Tibial artery (tissue), 4 donors: ENCODE measurements at regions of chr6 and their contacts with region 1.

Region 1: DNA sequence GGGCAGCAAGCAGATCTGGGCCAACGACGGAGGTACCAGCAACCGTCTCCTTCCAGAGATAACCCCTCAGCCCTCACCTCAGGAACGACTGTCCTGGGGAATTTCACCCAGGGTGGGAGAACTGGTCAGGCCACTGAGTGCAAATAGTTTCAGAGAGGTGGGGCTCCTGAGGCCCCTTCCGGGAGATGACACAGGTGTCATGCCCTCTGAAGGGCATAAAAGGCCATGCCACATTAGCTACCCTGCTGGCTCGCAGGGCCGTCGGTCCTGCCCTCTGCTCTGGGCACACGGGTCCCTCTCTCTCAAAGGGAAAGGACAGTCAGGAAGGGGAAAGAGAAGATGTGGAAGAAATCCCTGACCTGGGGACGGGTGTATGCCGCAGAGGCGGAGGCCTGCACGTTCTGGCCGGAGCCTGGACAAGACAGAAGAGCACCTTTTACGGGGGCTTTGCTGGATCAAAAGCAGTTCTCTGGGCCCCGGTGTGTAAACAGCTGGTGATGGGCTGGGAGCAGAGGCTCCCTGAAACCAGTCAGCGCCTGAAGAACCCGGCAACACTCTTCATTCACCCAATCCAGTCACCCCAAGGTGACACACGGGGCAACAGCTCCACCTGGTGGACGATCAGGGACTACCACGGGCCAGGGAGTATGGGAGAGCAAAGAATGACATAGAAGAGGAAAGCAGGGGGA is 6.4 kb upstream of the TAF8 start:
- DNase-seq: peak; percentile 83 to 90
- H3K4me3 ChIP-seq: no peak overlapping the region
- H3K27ac ChIP-seq: peak overlapping the region; percentile 79 to 87
- H3K4me1 ChIP-seq: peaks cover 4 to 70% (median 43%) of the 10 kb centered on the region in 4 donors
- H3K27me3 ChIP-seq: no peaks in the 10 kb centered on the region
- CTCF ChIP-seq: peak; percentile 90 to 93

Region 2: GRCh38 chr6:40536442-40536841 is 1507.5 kb before region 1 on chr6:
- intact Hi-C with region 1: no loop called
- DNase-seq: no peak
- H3K4me3 ChIP-seq: no peak overlapping the region
- H3K27ac ChIP-seq: no peak overlapping the region
- H3K4me1 ChIP-seq: no peaks in the 10 kb centered on the region
- H3K27me3 ChIP-seq: peaks cover 0 to 22% of the 10 kb centered on the region in 2 donors
- CTCF ChIP-seq: no peak

Region 3: DNA sequence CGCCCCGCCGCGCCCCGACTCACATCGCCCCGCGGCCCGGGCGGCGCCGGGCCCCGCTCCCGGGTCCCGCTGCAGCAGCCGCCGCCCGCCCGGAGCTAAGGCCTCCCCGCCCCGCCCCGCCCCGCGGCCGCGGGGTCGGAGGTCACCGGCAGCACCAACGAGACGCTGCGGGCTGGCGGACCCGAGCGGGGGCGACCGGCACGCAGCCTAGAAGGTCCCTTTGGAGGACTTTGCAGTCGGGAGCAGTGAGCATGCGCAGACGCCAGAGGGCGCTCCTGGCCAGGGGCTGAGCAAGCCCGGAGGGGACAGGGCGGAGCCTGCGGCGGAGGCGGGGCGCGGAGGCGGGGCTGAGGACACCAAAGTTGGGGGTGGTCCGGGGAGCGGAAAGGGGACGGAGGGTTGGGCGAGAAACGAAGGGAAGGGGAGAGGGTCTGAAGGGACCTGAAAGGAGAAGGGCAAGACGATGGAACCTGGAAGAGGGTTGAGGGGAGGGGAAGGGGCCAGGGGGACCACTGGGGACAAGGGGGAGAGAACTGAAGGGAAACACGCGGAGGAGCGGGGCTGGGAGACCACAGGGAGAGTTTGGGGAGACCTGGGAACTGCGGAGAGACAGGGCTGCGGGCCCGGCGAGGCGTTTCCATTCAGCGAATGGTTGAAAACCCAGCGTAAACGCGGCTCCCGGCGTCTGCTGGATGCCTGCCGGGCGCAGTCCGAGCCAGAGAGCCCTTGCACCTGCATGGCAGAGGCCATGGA is 264.0 kb before region 1 on chr6 and contains the start of gene FRS3:
- intact Hi-C with region 1: loop called (anchors 5 kb)
- DNase-seq: peak; percentile 97 to 99
- H3K4me3 ChIP-seq: peak within 1 kb of the TSS; percentile 75 to 80
- H3K27ac ChIP-seq: peak within 1 kb of the TSS; percentile 80 to 86
- H3K4me1 ChIP-seq: peaks cover 0 to 26% (median 18%) of the 10 kb centered on the region in 4 donors
- H3K27me3 ChIP-seq: no peaks in the 10 kb centered on the region
- CTCF ChIP-seq: peak; percentile 93 to 95

Region 4: DNA sequence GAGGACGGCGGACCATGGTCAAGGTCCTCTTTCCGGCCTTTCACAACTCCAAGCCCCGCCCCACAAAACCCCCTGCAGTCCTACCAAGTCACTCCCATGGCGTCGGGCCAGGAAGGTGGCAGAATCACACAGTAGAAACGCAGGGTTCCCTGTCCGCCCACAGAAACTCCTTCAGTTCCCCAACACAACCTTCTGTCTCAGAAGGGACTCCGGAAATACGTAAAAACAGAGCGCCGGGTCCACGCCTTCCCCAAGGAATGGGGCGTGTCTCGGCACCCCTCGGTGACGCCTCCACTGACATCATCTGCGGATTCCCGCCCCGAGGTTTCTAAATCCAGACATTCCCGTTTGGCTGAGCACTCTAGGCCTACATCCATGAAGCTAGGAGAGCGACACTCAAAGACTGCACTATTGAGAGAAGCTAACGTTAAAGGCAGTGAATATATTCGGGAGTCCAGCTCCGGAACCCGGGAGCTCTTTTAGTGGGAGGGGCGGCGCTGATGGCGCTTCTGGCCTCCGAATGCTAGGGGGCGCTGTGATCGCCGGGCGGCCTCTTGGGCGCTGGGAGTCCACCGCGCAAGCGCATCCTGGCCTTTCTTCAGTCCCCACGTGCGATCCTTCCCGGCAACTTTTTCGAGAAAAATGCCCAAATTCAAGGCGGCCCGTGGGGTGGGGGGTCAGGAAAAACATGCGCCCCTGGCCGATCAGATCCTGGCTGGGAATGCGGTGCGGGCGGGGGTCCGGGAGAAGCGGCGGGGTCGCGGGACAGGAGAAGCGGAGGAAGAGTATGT is 122.8 kb before region 1 on chr6 and contains the starts of genes BYSL and MED20:
- intact Hi-C with region 1: loop called (anchors 5 kb)
- DNase-seq: peak; percentile 92 to 94
- H3K4me3 ChIP-seq: peak within 1 kb of the TSS; percentile 80 to 81
- H3K27ac ChIP-seq: peak within 1 kb of the TSS; percentile 87 to 93
- H3K4me1 ChIP-seq: peaks cover 0 to 56% (median 38%) of the 10 kb centered on the region in 4 donors
- H3K27me3 ChIP-seq: no peaks in the 10 kb centered on the region
- CTCF ChIP-seq: peak; percentile 96 to 98

Region 5: GRCh38 chr6:41941280-41942066 is 102.5 kb before region 1 on chr6 and contains the start of gene CCND3:
- intact Hi-C with region 1: loop called (anchors 2 kb)
- DNase-seq: peak; percentile 90 to 92
- H3K4me3 ChIP-seq: peak within 1 kb of the TSS; percentile 77 to 78
- H3K27ac ChIP-seq: peak within 1 kb of the TSS; percentile 60 to 76
- H3K4me1 ChIP-seq: peaks cover 0 to 53% (median 24%) of the 10 kb centered on the region in 4 donors
- H3K27me3 ChIP-seq: no peaks in the 10 kb centered on the region
- CTCF ChIP-seq: no peak